ENCODE measurements at regions of chr10 and their contacts with region 1.

Region 1: DNA sequence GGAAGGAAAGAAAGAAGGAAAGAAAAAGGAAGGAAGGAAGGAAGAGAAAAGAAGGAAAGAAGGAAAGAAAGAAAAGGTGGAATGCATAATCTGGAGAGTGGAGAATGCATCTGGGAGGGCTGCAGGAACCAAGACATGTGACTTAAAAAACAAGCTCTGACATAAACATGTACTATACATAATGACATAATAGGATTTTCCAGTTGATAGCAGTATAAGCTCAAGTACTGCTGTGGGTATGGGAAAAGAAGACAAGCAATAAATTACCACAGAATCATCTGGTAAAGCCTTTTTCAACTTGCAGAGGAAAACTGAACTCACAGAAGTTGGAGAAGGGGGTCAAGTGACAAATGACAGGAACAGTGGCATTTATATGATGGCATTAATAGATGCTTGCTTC is 345.9 kb downstream of the PLXDC2 start:
- DNase-seq: peak; percentile 85
- H3K4me3 ChIP-seq: no peak overlapping the region
- H3K27ac ChIP-seq: peak overlapping the region; percentile 75
- H3K4me1 ChIP-seq: peaks cover 73% of the 10 kb centered on the region
- H3K27me3 ChIP-seq: no peaks in the 10 kb centered on the region
- CTCF ChIP-seq: no peak

Region 2: GRCh38 chr10:19892295-19893076 is 269.6 kb before region 1 on chr10:
- CTCF ChIA-PET with region 1: no interaction called
- POLR2A ChIA-PET with region 1: interaction called, 10 read pairs
- intact Hi-C with region 1: no loop called
- DNase-seq: no peak
- H3K4me3 ChIP-seq: no peak overlapping the region
- H3K27ac ChIP-seq: no peak overlapping the region
- H3K4me1 ChIP-seq: peaks cover 34% of the 10 kb centered on the region
- H3K27me3 ChIP-seq: no peaks in the 10 kb centered on the region
- CTCF ChIP-seq: no peak

Region 3: DNA sequence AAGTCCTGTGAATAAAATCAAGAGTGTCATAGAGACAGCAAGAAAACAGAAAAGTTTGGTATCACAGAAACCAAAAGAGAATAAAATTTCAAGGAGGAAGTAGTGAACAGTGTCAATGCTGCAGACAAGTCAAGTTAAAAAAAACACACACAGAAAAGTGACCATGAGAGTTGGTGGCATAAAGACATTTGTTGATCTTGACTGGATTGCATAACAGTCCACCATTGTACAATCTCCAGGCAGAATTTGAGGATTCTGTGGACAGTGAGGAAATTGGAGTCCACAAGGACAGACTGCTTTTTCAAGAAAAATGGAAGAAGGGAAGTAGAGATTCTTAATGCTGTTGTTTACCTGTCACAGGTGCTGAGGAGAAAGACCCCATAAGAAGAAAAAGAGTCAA is 66.6 kb after region 1 on chr10:
- CTCF ChIA-PET with region 1: no interaction called
- POLR2A ChIA-PET with region 1: no interaction called
- intact Hi-C with region 1: no loop called
- DNase-seq: no peak
- H3K4me3 ChIP-seq: no peak overlapping the region
- H3K27ac ChIP-seq: no peak overlapping the region
- H3K4me1 ChIP-seq: peaks cover 35% of the 10 kb centered on the region
- H3K27me3 ChIP-seq: no peaks in the 10 kb centered on the region
- CTCF ChIP-seq: no peak

Region 4: GRCh38 chr10:21078410-21079329 is 916.5 kb after region 1 on chr10:
- CTCF ChIA-PET with region 1: no interaction called
- POLR2A ChIA-PET with region 1: no interaction called
- intact Hi-C with region 1: no loop called
- DNase-seq: peak; percentile 87
- H3K4me3 ChIP-seq: no peak overlapping the region
- H3K27ac ChIP-seq: no peak overlapping the region
- H3K4me1 ChIP-seq: no peaks in the 10 kb centered on the region
- H3K27me3 ChIP-seq: peaks cover 19% of the 10 kb centered on the region
- CTCF ChIP-seq: peak; percentile 83

Measured in A673 (cell line).